ENCODE measurements at regions of chr1 and their contacts with region 1.

Region 1: DNA sequence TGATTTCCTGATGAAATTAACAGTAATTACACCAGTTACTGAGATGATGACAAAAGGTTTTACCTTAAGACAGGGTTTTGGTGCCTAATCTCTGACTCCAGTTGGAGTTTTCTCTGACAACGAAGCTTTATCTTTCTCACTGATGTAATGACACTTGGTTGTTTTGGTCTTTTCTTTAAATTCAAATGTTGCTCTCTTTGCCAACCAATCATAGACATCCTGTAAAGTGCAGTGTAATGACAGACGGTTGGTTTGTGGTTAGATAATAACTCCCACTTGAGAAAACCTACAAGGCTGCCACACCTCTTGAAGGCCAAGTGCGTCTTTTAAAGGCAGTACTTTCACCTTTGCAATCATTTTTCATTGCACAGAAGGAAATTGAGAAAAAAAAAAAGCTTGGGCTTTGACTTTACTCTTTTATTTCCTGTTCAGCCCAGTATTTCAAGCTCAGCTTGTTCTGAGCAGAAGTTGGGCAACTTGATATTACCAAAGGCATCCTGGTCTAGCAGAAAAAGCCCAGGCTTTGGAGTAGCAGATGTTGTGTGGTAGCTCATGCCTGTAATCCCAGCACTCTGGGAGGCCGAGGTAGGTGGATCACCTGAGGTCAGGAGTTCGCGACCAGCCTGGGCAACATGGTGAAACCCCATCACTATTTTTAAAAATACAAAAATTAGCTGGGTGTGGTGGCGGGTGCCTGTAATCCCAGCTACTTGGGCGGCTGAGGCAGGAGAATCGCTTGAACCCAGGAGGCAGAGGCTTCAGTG is 14.9 kb downstream of the PDIK1L start:
- DNase-seq: peak; percentile 65
- H3K4me3 Mint-ChIP-seq: peak overlapping the region; percentile 67
- H3K27ac Mint-ChIP-seq: peak overlapping the region; percentile 95
- H3K4me1 Mint-ChIP-seq: peaks cover 51% of the 10 kb centered on the region
- H3K27me3 Mint-ChIP-seq: no peaks in the 10 kb centered on the region

Region 2: DNA sequence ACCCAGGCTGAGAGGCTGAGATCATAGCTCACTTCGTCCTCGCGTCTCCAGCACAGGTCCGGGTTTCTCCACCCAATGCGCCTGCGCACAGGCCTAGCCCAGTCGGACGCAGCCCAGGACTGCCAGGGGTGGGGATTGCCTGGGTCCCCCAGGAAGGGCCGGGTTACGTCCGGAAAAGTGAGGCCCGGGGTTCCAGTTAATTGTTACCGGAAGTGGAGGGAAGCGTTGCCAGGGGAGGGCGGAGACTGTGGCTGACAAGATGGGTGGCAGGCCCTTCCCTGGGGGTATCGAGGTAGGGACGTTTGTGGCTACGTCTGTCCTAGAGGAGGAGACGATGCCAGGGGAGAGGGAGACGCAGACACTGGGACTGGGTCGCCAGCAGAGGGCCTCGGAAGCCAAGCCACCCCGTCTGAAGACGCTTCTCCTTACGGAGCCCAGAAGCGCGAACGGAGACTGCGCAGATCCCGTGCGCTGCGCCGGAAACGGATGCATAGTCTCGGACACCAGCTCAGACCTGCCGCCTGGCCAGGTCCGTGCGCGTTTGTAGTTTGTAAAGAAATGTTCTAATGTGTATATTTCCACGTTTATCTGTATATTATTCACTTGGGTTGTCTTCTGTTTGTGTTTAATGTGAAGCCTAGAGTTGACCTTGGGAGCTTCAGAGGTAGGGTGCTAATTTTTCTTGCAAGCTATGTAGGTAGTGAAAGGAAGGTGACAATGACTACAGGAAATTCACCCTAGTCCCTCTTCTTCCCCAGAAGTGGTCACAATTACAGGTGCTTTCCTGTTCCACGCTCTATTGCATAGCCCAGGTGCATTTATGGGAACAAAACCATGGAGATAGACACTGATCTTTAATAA is 886.6 kb before region 1 on chr1:
- CTCF ChIA-PET with region 1: no interaction called
- intact Hi-C with region 1: loop called (anchors 10 kb)
- DNase-seq: peak; percentile 96
- H3K4me3 Mint-ChIP-seq: peak overlapping the region; percentile 91
- H3K27ac Mint-ChIP-seq: peak overlapping the region; percentile 99
- H3K4me1 Mint-ChIP-seq: peaks cover 48% of the 10 kb centered on the region
- H3K27me3 Mint-ChIP-seq: no peaks in the 10 kb centered on the region

Region 3: DNA sequence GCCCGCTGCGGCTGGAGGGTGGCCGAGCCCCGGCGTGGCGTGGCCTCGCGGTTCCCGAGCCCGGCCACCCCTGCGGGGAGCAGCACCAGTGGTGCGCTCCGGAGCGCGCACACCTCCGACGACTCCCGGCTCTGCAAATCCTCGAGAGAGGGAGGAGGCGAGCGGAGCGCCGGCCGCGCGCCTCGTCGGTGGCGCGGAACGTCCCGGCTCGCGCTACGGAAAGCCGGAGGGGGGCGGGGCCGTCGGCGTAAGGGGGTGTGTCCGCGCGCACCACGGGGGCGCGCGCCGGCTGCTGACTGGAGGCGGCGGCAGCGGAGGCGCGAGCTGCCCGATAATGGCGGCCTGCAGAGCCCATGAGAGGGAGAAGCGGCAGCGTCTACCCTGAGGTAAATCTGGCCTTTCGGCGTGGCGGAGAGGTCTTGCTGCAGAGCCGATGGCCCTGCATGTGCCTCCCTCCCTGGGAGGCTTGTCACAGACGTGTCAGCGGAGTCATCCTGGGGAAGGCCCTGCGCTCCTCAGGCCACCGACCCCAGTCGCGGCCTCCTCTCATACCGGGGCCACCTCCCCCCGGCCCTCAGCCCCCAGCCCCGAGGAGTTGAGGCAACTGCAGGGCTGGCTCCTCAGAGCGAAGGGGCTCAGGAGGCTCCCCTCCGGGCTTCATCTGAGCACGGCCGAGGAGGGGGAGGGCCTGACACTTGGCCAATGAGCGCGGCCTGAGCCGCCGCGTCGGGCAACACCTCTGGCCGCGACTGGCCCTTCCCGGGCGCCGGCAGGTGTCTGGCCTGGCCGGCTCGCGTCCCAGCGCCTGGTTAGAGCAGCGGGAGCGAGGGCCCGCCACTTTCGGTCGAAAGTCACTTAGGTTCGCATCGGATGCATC is 14.7 kb before region 1 on chr1 and contains the start of gene PDIK1L:
- CTCF ChIA-PET with region 1: interaction called, 11 read pairs
- intact Hi-C with region 1: loop called (anchors 1 kb)
- DNase-seq: peak; percentile 94
- H3K4me3 Mint-ChIP-seq: peak within 1 kb of the TSS; percentile 96
- H3K27ac Mint-ChIP-seq: peak within 1 kb of the TSS; percentile 90
- H3K4me1 Mint-ChIP-seq: peaks cover 28% of the 10 kb centered on the region
- H3K27me3 Mint-ChIP-seq: no peaks in the 10 kb centered on the region
- total RNA-seq, gene PDIK1L: 20.5 to 21.4 TPM

Region 4: GRCh38 chr1:26161415-26162219 is 35.1 kb after region 1 on chr1:
- CTCF ChIA-PET with region 1: no interaction called
- intact Hi-C with region 1: no loop called
- DNase-seq: peak; percentile 48
- H3K4me3 Mint-ChIP-seq: peak overlapping the region; percentile 50
- H3K27ac Mint-ChIP-seq: no peak overlapping the region
- H3K4me1 Mint-ChIP-seq: peaks cover 16% of the 10 kb centered on the region
- H3K27me3 Mint-ChIP-seq: peaks cover 27% of the 10 kb centered on the region

Region 5: GRCh38 chr1:26306290-26307229 is 180.1 kb after region 1 on chr1 and contains the start of gene UBXN11:
- CTCF ChIA-PET with region 1: no interaction called
- intact Hi-C with region 1: loop called (anchors 2 kb)
- DNase-seq: peak; percentile 98
- H3K4me3 Mint-ChIP-seq: peak within 1 kb of the TSS; percentile 99
- H3K27ac Mint-ChIP-seq: peak within 1 kb of the TSS; percentile 97
- H3K4me1 Mint-ChIP-seq: peaks cover 38% of the 10 kb centered on the region
- H3K27me3 Mint-ChIP-seq: no peaks in the 10 kb centered on the region
- total RNA-seq, gene UBXN11: 26.4 to 26.9 TPM

Region 6: GRCh38 chr1:26472901-26473845 is 346.7 kb after region 1 on chr1:
- CTCF ChIA-PET with region 1: no interaction called
- intact Hi-C with region 1: loop called (anchors 2 kb)
- DNase-seq: peak; percentile 96
- H3K4me3 Mint-ChIP-seq: peak overlapping the region; percentile 87
- H3K27ac Mint-ChIP-seq: peak overlapping the region; percentile 71
- H3K4me1 Mint-ChIP-seq: peaks cover 49% of the 10 kb centered on the region
- H3K27me3 Mint-ChIP-seq: no peaks in the 10 kb centered on the region

Region 7: DNA sequence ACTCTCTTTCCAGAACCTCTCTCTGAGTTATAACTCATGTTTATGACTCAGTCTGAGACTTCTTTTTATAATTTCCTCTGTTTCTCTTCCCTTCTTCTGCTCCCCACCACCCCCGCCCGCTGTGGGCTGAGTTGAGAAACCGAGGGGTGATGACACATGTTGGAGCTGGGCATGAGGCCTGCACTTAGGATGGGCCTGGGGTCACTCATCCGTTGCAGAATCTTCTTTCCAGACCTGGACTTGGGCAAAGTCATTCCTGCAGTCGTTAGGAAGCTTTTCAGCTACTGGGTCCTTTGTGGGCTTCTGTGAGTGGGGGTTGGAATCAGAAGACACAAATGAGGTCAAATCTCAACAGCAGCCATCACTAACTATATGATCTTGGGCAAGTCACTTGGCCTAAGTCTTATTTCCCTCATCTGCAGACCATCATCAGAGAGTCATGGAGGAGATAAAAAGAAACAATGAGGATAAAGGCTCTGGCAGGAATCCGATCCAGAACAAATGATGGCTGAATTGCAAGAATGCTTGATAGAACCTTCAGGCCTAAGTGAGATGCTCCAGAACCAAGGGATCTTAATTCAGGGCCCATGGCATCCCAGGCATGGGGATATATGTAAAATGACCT is 456.4 kb after region 1 on chr1:
- CTCF ChIA-PET with region 1: no interaction called
- intact Hi-C with region 1: loop called (anchors 5 kb)
- DNase-seq: peak; percentile 90
- H3K4me3 Mint-ChIP-seq: no peak overlapping the region
- H3K27ac Mint-ChIP-seq: peak overlapping the region; percentile 72
- H3K4me1 Mint-ChIP-seq: peaks cover 51% of the 10 kb centered on the region
- H3K27me3 Mint-ChIP-seq: no peaks in the 10 kb centered on the region